Pancreas (tissue), 10 donors: ENCODE measurements at regions of chr14 and their contacts with region 1.

Region 1: DNA sequence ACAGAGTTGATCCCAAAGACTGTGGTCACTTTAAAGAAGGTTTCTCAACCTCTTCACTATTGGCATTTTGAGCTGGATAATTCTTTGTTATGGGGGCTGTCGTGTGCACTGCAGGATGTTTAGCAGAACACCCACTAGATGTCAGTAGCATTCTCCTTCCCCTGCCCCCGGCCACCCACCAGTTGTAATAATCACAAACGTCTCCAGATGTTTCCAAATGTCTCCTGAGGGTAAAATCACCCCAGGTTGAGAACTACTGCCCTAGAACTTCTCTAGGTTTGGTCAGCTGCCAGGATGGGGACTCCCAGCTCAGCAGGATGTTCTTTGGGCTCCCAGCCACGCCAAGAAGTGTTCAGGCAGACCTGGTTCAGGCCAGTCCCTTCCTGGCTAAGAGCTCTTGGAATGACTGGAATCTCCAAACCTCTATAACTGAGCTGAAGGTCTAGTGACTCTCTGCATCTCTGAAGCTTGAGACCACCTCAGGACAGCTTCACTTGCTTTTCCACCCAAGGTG is 12.5 kb upstream of the AJUBA start:
- DNase-seq: no peak
- ATAC-seq: peak in 3 of 4 donors; percentile 69 to 82 (median 80)
- H3K4me3 ChIP-seq: no peak overlapping the region
- H3K27ac ChIP-seq: no peak overlapping the region
- H3K4me1 ChIP-seq: no peaks in the 10 kb centered on the region
- H3K27me3 ChIP-seq: no peaks in the 10 kb centered on the region
- CTCF ChIP-seq: peak in 2 of 4 donors; percentile 19 to 25

Region 2: DNA sequence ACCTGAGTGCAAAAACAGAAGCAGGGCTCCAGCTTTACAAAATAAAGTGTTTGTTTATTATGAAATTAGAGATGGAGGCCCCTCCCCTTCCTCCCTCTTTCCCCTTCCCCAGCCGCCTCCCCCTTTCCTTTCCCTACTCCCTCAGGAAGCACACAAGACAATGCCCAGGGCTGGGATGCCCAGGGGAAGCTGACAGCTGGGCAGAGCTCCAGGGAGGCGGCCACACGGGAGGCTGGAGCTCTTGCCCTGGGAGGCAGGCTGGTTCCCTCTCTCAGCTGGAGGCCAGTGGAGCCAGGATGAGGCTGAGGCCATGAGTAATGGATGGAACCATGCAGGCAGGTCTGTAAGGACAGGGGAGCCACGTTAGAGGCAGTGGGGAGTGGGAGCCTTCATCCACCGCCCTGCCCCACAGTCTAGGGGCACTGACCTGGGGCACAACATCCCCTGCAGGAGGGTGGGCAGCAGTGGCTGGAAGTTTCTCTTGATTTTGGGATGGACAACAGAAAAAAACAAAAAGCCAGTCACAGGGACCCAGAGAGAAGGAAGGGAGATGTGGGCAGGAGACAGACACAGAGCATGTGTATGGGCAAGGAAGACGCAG is 52.3 kb after region 1 on chr14:
- intact Hi-C with region 1: loop called in 2 of 3 experiments (anchors 5 to 10 kb)
- DNase-seq: no peak
- ATAC-seq: no peak
- H3K4me3 ChIP-seq: no peak overlapping the region
- H3K27ac ChIP-seq: no peak overlapping the region
- H3K4me1 ChIP-seq: no peaks in the 10 kb centered on the region
- H3K27me3 ChIP-seq: no peaks in the 10 kb centered on the region
- CTCF ChIP-seq: no peak

Region 3: GRCh38 chr14:23057757-23058653 is 63.2 kb after region 1 on chr14:
- intact Hi-C with region 1: loop called in 1 of 3 experiments (anchors 10 kb)
- DNase-seq: peak; percentile 78 to 97 (median 90)
- ATAC-seq: peak; percentile 78 to 92 (median 87)
- H3K4me3 ChIP-seq: peak overlapping the region; percentile 43 to 63 (median 52)
- H3K27ac ChIP-seq: peak overlapping the region; percentile 28 to 65 (median 54)
- H3K4me1 ChIP-seq: peaks cover 0 to 15% (median 3%) of the 10 kb centered on the region in 3 donors
- H3K27me3 ChIP-seq: no peaks in the 10 kb centered on the region
- CTCF ChIP-seq: peak; percentile 93 to 95 (median 94)